GM10248 (cell line): ENCODE measurements at regions of chr10 and their contacts with region 1.

Region 1: DNA sequence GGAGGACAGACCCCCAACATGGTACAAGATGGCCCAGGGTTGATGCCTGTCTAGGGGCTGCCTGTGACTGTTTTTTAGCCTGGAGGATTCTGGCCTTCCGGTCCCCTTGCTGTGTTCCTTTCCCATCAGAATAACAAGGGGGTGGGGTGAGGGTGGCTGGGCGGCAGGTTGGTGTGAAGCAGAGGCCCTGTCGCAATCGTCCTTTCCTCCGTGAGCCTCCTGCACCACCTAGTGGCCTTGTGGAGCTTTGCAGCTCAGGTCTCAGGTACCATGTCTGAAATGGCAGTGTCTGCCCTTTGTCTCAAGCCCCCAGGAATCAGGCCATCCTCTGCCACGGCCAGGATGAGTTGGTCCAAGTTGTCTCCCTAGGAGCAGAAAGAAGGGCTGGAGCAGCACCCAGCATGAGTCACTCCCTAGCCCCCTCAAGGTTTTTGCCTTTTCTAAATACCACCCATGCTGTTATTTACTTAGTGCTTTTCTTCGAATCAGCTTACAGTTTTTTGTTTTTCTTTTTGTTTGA is 24.2 kb downstream of the TACR2 start:
- DNase-seq: peak; percentile 88
- CTCF ChIP-seq: peak; percentile 96

Region 2: DNA sequence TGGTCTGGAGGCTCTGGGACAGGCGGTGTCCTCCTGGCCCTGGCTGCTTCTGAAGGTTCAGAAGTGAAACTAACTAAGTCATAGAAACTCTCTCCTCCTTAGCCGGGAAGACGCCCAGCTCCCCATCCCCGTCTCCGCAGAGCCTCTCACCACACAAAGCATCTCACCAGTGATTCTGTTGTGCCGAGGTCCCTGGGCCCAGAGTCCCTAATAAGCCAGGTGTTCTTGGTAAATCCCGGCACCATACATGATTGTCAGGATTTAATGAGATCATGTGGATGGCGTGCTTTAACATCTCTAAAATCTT is 163.0 kb before region 1 on chr10:
- CTCF ChIA-PET with region 1: interaction called, 80 read pairs
- POLR2A ChIA-PET with region 1: no interaction called
- DNase-seq: no peak
- CTCF ChIP-seq: no peak

Region 3: GRCh38 chr10:69237528-69238159 is 154.9 kb before region 1 on chr10:
- CTCF ChIA-PET with region 1: interaction called, 80 read pairs
- POLR2A ChIA-PET with region 1: no interaction called
- DNase-seq: peak; percentile 87
- CTCF ChIP-seq: peak; percentile 96

Region 4: GRCh38 chr10:69375307-69376151 is 17.0 kb before region 1 on chr10:
- CTCF ChIA-PET with region 1: interaction called, 11 read pairs
- POLR2A ChIA-PET with region 1: no interaction called
- DNase-seq: no peak
- CTCF ChIP-seq: no peak

Region 5: DNA sequence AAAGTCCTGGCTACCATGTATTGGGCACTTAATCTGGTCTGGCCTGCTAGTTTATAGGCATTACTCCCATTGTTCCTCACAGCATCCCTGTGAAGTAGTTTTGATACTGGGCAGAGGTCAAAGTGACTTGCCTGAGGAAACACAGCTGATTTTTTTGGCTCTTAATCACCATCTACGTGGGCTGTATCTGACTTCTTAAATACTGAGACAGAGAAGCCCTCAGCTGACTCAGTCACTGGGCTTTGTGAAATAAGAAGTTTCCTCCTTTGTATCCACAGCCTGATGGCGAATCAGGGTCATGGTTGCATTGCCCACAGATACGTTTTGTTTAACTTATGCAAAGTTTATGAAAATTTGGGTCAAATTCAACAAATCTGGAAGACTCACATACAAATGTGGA is 11.0 kb after region 1 on chr10:
- CTCF ChIA-PET with region 1: interaction called, 30 read pairs
- POLR2A ChIA-PET with region 1: no interaction called
- DNase-seq: no peak
- CTCF ChIP-seq: no peak

Region 6: GRCh38 chr10:69416695-69417094 is 24.2 kb after region 1 on chr10 and contains the start of gene TACR2:
- CTCF ChIA-PET with region 1: no interaction called
- POLR2A ChIA-PET with region 1: no interaction called
- DNase-seq: no peak
- CTCF ChIP-seq: no peak